Activated CD8-positive, alpha-beta T cell treated with anti-CD3 and anti-CD28 coated beads for 36 hours (primary cell): ENCODE measurements at regions of chr4 and their contacts with region 1.

Region 1: DNA sequence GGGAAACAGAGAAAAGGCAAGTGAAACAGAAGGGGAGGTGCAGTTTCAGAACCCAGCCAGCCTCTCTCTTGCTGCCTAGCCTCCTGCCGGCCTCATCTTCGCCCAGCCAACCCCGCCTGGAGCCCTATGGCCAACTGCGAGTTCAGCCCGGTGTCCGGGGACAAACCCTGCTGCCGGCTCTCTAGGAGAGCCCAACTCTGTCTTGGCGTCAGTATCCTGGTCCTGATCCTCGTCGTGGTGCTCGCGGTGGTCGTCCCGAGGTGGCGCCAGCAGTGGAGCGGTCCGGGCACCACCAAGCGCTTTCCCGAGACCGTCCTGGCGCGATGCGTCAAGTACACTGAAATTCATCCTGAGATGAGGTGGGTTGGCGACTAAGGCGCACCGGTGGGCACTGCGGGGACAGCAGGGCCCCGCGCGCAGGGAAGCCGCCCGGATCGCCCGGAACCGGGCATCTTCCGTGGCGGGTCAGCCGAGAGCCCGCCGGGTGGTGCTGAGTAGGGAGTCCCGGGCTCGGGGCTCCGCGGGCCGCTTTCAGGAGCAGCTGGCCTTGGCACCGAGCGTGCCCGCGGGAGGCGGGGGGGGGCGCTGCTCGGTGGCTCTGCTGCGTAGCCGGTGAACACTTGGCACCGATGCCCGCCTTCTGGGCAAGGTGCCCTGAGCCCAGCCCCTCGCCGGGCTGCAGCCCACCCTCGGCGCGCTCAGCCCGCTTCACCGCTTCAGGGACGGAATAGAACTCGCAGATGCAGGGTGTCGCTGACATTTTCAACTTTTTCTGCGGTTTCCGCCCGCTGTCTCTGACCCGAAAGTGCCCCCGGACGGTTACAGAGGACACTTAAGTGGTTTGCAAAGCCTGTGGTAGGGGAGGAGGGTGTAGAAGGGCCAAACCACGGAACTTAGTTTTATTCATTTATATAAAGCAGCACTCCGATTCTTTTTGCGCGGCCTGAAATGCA is at the start of gene CD38:
- DNase-seq: peak; percentile 84
- ATAC-seq: peak; percentile 81
- H3K4me3 Mint-ChIP-seq: peak within 1 kb of the TSS; percentile 85
- H3K27ac Mint-ChIP-seq: peak within 1 kb of the TSS; percentile 88
- H3K4me1 Mint-ChIP-seq: peaks cover 67% of the 10 kb centered on the region
- H3K27me3 Mint-ChIP-seq: peaks cover 15% of the 10 kb centered on the region
- CTCF ChIP-seq: no peak
- total RNA-seq, gene CD38: 24.3 to 25.6 TPM

Region 2: GRCh38 chr4:15513545-15513944 is 265.0 kb before region 1 on chr4:
- CTCF ChIA-PET with region 1: no interaction called
- POLR2A ChIA-PET with region 1: no interaction called
- intact Hi-C with region 1: no loop called
- DNase-seq: no peak
- ATAC-seq: no peak
- H3K4me3 Mint-ChIP-seq: no peak overlapping the region
- H3K27ac Mint-ChIP-seq: no peak overlapping the region
- H3K4me1 Mint-ChIP-seq: no peaks in the 10 kb centered on the region
- H3K27me3 Mint-ChIP-seq: no peaks in the 10 kb centered on the region
- CTCF ChIP-seq: no peak

Region 3: GRCh38 chr4:15738877-15739276 is 39.7 kb before region 1 on chr4:
- CTCF ChIA-PET with region 1: interaction called, 4 read pairs
- POLR2A ChIA-PET with region 1: no interaction called
- intact Hi-C with region 1: loop called (anchors 5 kb)
- DNase-seq: peak; percentile 17
- ATAC-seq: peak; percentile 79
- H3K4me3 Mint-ChIP-seq: no peak overlapping the region
- H3K27ac Mint-ChIP-seq: peak overlapping the region; percentile 17
- H3K4me1 Mint-ChIP-seq: peaks cover 34% of the 10 kb centered on the region
- H3K27me3 Mint-ChIP-seq: no peaks in the 10 kb centered on the region
- CTCF ChIP-seq: no peak

Region 4: GRCh38 chr4:15756361-15756861 is 22.2 kb before region 1 on chr4:
- CTCF ChIA-PET with region 1: interaction called, 112 read pairs
- POLR2A ChIA-PET with region 1: interaction called, 19 read pairs
- intact Hi-C with region 1: no loop called
- DNase-seq: peak; percentile 90
- ATAC-seq: peak; percentile 84
- H3K4me3 Mint-ChIP-seq: peak overlapping the region; percentile 66
- H3K27ac Mint-ChIP-seq: peak overlapping the region; percentile 92
- H3K4me1 Mint-ChIP-seq: peaks cover 47% of the 10 kb centered on the region
- H3K27me3 Mint-ChIP-seq: no peaks in the 10 kb centered on the region
- CTCF ChIP-seq: peak; percentile 73

Region 5: DNA sequence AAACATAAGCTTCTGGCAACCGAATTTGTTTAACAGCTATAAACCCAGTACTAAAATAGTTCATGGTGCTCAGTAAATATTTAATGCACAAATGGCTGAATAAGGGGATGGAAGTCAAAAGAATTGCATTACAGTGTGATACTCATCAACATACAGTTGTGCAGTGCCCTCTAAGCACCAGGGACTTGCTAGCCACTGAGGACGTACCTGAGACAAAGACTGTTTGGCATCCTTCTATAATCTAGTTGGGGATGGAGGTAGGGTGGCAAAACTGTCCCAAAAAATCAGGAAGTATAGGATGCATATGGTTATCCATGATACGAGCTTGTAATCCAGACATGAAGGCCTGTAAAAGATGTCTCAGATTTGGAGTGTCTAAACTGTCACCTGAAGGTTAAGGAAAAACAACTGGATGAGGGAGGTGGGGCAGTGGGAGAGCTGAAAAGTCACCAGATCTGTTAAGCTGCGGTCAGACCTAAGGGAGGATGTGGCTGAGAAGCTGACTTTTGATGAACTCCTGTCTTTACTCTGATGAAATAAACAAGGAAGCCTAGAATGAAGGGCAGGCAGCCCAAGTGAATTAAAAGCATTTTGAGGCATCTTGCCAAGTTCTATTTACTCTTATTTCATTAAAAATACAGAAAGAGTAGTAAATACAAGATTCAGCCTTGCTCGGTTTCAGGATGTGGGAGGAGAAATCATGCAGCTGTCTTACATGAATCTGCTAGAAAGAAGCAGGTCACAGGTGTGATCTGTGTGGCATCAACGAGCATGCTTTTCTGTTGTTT is 12.5 kb before region 1 on chr4:
- CTCF ChIA-PET with region 1: interaction called, 112 read pairs
- POLR2A ChIA-PET with region 1: interaction called, 19 read pairs
- intact Hi-C with region 1: no loop called
- DNase-seq: peak; percentile 70
- ATAC-seq: peak; percentile 67
- H3K4me3 Mint-ChIP-seq: peak overlapping the region; percentile 9
- H3K27ac Mint-ChIP-seq: peak overlapping the region; percentile 35
- H3K4me1 Mint-ChIP-seq: peaks cover 47% of the 10 kb centered on the region
- H3K27me3 Mint-ChIP-seq: peaks cover 1% of the 10 kb centered on the region
- CTCF ChIP-seq: no peak

Region 6: DNA sequence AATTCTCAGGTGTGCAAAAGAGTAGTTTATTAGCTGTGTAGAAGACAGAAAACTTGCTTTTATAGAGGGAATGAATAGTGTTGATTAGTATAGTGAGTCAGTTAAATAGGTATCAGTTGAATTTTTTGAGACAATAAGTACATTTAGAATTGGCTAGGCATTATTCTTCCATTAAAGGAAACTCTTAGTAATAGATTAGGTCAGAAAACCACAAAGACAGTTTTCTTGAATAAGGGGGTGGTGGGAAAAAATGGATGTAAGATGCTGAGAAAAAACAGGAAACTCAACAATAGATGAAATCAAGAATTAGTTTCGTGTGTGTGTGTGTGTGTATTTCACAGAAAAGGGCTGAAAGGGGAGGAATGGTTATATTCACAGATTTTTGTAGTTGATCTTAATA is 16.3 kb after region 1 on chr4:
- CTCF ChIA-PET with region 1: interaction called, 5 read pairs
- POLR2A ChIA-PET with region 1: interaction called, 3 read pairs
- intact Hi-C with region 1: loop called (anchors 2 kb)
- DNase-seq: no peak
- ATAC-seq: peak; percentile 81
- H3K4me3 Mint-ChIP-seq: peak overlapping the region; percentile 47
- H3K27ac Mint-ChIP-seq: peak overlapping the region; percentile 81
- H3K4me1 Mint-ChIP-seq: peaks cover 45% of the 10 kb centered on the region
- H3K27me3 Mint-ChIP-seq: no peaks in the 10 kb centered on the region
- CTCF ChIP-seq: no peak